Activated B cell treated with CpG ODN at 0.5 μM for 24 hours (primary cell): ENCODE measurements at regions of chr2 and their contacts with region 1.

Region 1: DNA sequence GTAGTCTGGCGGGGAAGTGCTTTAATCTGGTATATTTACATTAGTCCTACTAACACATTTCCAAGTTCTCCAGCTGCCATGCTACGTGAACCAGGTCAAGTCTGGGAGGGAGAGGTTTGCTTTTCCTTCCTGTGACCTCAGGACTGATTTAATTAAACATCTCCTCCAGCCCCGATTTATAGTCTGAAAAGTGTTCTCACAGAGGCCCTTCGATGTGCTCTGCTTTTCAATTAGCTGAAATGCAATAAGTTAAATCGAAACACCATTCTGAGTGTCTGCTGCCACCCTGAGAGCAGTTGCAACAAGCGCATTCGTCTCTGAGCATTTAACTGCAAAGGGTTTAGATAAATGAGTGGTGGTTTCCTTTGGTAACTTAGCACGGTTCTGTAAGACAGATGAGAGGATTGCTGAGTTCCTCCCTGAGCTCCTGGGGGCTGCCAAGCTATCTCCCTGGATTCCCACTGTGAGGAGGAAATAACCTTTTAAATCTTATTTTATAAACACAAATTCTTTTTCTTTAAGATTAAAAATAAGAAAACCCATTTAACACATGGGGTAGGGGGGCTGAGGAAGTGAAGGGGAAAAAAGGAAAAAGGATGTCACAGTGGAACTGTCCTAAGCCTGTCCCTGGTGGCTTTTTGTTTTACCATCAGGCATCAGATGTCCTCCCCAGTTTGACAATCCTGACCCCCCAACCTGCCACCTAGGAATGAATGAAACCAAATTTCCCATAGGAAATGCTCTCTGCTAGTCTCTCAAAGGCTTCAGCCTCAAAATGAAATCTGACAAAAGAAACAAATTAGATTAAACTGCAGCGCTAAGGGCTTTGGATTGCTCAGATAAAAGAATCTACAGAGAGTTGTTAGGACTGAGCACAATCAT is 56.5 kb upstream of the CREB1 start:
- DNase-seq: no peak
- ATAC-seq: no peak
- H3K4me3 Mint-ChIP-seq: no peak overlapping the region
- H3K27ac Mint-ChIP-seq: no peak overlapping the region
- H3K4me1 Mint-ChIP-seq: peaks cover 8% of the 10 kb centered on the region
- H3K27me3 Mint-ChIP-seq: no peaks in the 10 kb centered on the region
- CTCF ChIP-seq: no peak

Region 2: GRCh38 chr2:206392118-206392517 is 1081.2 kb before region 1 on chr2:
- CTCF ChIA-PET with region 1: no interaction called
- POLR2A ChIA-PET with region 1: no interaction called
- intact Hi-C with region 1: loop called (anchors 2 kb)
- DNase-seq: no peak
- ATAC-seq: peak; percentile 49
- H3K4me3 Mint-ChIP-seq: no peak overlapping the region
- H3K27ac Mint-ChIP-seq: no peak overlapping the region
- H3K4me1 Mint-ChIP-seq: no peaks in the 10 kb centered on the region
- H3K27me3 Mint-ChIP-seq: no peaks in the 10 kb centered on the region
- CTCF ChIP-seq: no peak

Region 3: DNA sequence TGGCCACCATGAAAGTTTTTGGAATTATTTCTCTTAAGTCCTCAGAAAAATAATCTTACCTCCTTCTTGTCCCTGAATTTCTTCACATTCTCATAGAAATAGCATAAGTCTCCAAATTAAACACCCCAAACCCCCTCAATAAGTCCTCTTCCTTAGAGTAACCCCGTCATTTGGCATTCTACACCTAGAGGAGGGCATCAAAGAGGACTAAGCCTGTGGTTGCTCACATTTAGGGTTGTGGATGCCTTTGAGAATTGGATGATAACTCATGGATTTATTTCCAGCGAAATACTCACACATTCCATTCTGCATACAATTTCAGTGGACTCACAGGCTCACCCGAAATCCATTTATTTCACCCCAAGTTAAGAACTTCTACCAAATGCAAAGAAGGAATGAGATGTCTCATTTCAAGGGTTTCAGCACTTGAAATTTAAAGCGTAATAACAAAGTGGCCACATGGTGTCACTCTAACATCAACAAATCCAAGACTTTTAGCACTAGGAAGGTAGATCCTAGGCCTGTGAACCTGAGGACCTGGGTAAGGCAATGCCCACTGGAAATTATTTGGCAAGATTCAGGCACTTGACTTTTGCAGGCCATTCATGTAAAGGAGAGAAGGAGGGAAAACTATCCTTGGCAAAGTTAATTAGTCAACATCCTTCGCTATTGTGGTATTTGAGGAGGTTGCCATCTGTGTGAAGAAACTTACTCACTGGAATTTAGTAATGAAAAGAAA is 779.7 kb before region 1 on chr2:
- CTCF ChIA-PET with region 1: interaction called, 5 read pairs
- POLR2A ChIA-PET with region 1: no interaction called
- intact Hi-C with region 1: loop called (anchors 1 kb)
- DNase-seq: no peak
- ATAC-seq: peak; percentile 31
- H3K4me3 Mint-ChIP-seq: no peak overlapping the region
- H3K27ac Mint-ChIP-seq: no peak overlapping the region
- H3K4me1 Mint-ChIP-seq: no peaks in the 10 kb centered on the region
- H3K27me3 Mint-ChIP-seq: peaks cover 12% of the 10 kb centered on the region
- CTCF ChIP-seq: no peak

Region 4: DNA sequence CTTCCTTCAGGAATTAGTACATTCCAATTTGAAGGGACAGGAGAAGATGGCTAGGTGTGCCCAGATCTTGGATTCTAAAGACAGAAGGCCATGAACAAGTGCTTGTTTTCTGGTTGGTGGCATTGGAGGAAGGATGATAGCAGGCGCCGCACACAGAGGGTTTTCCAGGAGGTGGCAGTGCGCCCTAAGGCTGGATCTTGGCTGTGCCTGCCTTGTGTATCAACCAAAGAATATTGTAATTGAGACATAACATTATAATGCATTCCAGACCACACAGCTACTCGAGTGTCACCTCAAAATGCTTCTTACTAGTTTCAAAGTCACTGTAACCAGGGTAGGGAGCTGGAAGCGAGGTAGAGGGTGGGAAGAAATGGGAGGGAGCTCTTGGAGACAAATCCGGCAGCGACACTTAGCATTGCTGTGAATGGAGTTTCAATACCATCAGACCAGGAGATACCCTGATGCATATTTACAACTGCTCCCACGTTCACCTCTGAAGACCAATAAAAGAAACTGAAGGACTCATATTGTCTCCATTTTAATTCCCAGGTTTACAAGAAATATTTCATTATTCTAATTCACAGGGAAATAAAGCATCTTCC is 491.4 kb before region 1 on chr2:
- CTCF ChIA-PET with region 1: no interaction called
- POLR2A ChIA-PET with region 1: no interaction called
- intact Hi-C with region 1: loop called (anchors 1 kb)
- DNase-seq: peak; percentile 18
- ATAC-seq: peak; percentile 54
- H3K4me3 Mint-ChIP-seq: no peak overlapping the region
- H3K27ac Mint-ChIP-seq: no peak overlapping the region
- H3K4me1 Mint-ChIP-seq: no peaks in the 10 kb centered on the region
- H3K27me3 Mint-ChIP-seq: peaks cover 3% of the 10 kb centered on the region
- CTCF ChIP-seq: no peak

Region 5: DNA sequence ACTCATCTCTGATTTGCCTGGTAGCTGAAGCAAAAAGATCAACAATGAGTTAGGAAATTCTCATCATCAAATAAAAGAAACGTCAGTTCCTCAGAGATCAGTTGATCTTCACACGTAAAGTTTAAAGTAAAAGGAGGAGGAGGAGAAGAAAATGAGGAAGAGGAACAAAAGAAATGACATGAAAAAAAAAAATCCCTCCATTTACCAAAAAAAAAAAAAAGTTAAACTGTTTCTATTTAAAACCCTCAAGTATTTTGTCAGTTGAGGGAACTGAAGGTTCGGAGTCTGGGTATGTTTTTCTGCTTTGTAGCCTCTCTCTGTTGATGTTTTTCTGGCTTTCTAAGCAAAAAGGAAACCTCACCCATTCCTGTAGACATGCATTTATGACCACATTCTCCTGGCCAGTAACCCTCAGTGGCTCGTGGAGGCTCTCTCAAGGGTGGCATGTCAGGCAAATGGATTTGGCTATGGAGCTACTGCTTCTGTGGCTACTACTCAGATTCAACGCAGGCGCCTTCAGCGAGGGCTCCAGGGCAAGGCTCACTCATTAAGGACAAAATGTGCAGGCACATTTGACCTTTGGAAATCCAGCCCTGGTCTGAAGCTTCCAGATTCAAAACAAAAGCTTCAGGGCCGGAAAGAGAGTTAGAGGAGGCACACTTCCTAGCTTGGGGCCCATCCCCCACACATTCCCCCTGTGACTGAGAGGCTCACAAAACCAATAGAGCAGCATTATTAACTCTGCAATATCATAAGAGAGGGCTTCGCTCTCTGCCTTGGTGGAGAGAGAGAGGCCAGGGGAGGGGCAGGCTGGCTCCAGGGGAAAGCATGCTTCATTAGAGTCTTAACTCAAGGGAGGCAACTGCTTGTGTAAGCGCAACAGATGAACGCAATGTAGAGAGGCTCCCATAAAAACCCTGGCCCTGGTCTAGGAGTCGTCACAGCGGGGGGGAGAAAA is 329.8 kb before region 1 on chr2:
- CTCF ChIA-PET with region 1: interaction called, 14 read pairs
- POLR2A ChIA-PET with region 1: no interaction called
- intact Hi-C with region 1: loop called (anchors 1 kb)
- DNase-seq: peak; percentile 34
- ATAC-seq: peak; percentile 65
- H3K4me3 Mint-ChIP-seq: peak overlapping the region; percentile 52
- H3K27ac Mint-ChIP-seq: peak overlapping the region; percentile 92
- H3K4me1 Mint-ChIP-seq: peaks cover 61% of the 10 kb centered on the region
- H3K27me3 Mint-ChIP-seq: no peaks in the 10 kb centered on the region
- CTCF ChIP-seq: no peak